ENCODE measurements at regions of chr17 and their contacts with region 1.

Region 1: DNA sequence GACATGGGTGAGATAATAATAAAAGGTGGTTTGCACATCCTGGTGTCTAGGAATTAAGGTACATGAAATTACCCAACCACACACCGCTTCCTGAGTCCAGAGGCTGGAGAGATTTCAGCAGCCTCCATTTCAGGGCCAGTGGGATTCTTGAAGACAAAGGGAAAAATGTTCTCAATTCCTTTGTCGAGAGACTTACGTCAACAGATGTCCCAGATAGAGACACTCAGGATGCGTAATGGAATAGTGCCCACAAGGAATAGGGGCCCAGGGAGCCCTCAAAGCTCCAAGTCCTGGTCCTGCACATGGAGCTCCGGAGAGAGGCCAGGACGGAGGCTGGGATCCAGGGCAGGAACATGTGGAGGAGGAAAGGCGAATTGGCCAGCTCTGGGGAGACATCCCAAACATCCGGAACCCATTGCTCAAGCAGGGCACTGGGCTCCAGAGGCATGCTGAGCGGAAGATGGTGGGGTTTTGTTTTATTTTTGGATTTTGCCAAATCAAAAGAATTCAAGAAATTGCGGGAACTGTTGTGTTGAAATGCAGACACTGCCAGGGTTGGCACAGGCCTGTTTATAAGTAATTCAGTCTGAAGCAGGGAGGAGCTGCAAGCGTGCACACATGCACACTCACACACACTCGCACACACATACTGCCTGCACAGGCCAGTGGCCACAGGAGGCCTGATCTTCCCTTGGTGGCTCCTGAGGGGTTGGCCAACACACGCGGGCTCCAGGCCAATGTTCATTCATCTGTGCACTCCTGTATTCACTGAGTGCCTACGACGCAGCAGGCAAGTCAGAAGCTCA is 97.2 kb downstream of the NOG start:
- DNase-seq: no peak
- ATAC-seq: no peak
- H3K4me3 ChIP-seq: no peak overlapping the region
- H3K27ac ChIP-seq: no peak overlapping the region
- H3K4me1 ChIP-seq: no peaks in the 10 kb centered on the region
- H3K27me3 ChIP-seq: no peaks in the 10 kb centered on the region
- CTCF ChIP-seq: no peak

Region 2: GRCh38 chr17:56577843-56578204 is 112.9 kb before region 1 on chr17:
- CTCF ChIA-PET with region 1: interaction called, 14 read pairs
- POLR2A ChIA-PET with region 1: no interaction called
- intact Hi-C with region 1: no loop called
- DNase-seq: no peak
- ATAC-seq: no peak
- H3K4me3 ChIP-seq: no peak overlapping the region
- H3K27ac ChIP-seq: no peak overlapping the region
- H3K4me1 ChIP-seq: no peaks in the 10 kb centered on the region
- H3K27me3 ChIP-seq: peaks cover 69% of the 10 kb centered on the region
- CTCF ChIP-seq: no peak

Region 3: GRCh38 chr17:56638591-56639051 is 52.1 kb before region 1 on chr17:
- CTCF ChIA-PET with region 1: no interaction called
- POLR2A ChIA-PET with region 1: no interaction called
- intact Hi-C with region 1: no loop called
- DNase-seq: no peak
- ATAC-seq: no peak
- H3K4me3 ChIP-seq: no peak overlapping the region
- H3K27ac ChIP-seq: no peak overlapping the region
- H3K4me1 ChIP-seq: peaks cover 18% of the 10 kb centered on the region
- H3K27me3 ChIP-seq: no peaks in the 10 kb centered on the region
- CTCF ChIP-seq: no peak